ENCODE measurements at regions of chr3 and their contacts with region 1.

Region 1: DNA sequence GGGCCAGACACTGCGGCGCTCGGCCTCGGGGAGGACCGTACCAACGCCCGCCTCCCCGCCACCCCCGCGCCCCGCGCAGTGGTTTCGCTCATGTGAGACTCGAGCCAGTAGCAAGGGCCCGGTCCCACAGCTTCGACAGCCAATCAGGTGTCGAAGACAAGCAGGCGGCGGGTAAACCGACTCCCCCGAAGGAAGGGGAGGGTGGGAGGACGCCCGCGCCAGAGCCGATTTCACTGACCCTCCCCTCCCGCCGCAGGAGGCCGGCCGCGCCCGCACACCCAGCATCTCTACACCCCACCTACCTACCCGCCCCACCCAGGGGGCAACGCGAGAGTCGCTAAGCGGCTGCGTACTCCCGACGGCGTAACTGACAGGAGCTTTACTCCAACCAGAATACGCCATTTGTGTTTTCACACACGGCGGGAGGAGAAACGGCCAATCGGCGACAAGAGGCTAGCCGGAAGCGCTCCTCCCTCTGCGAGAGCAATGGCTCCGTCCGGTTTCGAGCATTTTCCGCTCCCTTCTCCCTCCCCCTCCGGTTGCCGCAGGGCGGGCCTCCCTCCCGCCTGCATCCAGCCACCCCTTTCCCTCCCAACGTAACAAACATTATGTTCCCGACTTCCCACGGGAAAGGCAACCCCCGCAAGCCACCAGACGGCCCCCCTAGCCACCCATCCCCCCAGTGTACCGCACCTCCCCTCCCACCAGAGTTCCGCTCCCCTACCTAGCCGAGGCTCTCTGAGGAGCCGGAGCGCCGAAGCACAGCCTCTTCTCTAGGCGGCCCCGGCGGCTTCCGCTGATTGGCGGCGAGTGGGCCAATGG is 504 bp upstream of the SETD5 start:
- DNase-seq: peak; percentile 98
- H3K4me3 Mint-ChIP-seq: peak overlapping the region; percentile 92
- H3K27ac Mint-ChIP-seq: peak overlapping the region; percentile 99
- H3K4me1 Mint-ChIP-seq: peaks cover 64% of the 10 kb centered on the region
- H3K27me3 Mint-ChIP-seq: no peaks in the 10 kb centered on the region

Region 2: GRCh38 chr3:9362731-9363530 is 34.0 kb before region 1 on chr3 and contains the start of gene THUMPD3:
- CTCF ChIA-PET with region 1: interaction called, 6 read pairs
- POLR2A ChIA-PET with region 1: interaction called, 29 read pairs
- DNase-seq: peak; percentile 93
- H3K4me3 Mint-ChIP-seq: peak within 1 kb of the TSS; percentile 98
- H3K27ac Mint-ChIP-seq: peak within 1 kb of the TSS; percentile 99
- H3K4me1 Mint-ChIP-seq: peaks cover 37% of the 10 kb centered on the region
- H3K27me3 Mint-ChIP-seq: peaks cover 2% of the 10 kb centered on the region
- total RNA-seq, gene THUMPD3: 46.6 to 48.0 TPM

Region 3: GRCh38 chr3:9690451-9691450 is 293.8 kb after region 1 on chr3:
- CTCF ChIA-PET with region 1: no interaction called
- POLR2A ChIA-PET with region 1: no interaction called
- DNase-seq: no peak
- H3K4me3 Mint-ChIP-seq: no peak overlapping the region
- H3K27ac Mint-ChIP-seq: no peak overlapping the region
- H3K4me1 Mint-ChIP-seq: no peaks in the 10 kb centered on the region
- H3K27me3 Mint-ChIP-seq: no peaks in the 10 kb centered on the region

Measured in activated CD4-positive, alpha-beta T cell treated with anti-CD3 and anti-CD28 coated beads, Interleukin-2, amount 10 ng/mL, durations not matched to agents 7 days and 5 days (primary cell).